ENCODE measurements at regions of chr2 and their contacts with region 1.

Region 1: DNA sequence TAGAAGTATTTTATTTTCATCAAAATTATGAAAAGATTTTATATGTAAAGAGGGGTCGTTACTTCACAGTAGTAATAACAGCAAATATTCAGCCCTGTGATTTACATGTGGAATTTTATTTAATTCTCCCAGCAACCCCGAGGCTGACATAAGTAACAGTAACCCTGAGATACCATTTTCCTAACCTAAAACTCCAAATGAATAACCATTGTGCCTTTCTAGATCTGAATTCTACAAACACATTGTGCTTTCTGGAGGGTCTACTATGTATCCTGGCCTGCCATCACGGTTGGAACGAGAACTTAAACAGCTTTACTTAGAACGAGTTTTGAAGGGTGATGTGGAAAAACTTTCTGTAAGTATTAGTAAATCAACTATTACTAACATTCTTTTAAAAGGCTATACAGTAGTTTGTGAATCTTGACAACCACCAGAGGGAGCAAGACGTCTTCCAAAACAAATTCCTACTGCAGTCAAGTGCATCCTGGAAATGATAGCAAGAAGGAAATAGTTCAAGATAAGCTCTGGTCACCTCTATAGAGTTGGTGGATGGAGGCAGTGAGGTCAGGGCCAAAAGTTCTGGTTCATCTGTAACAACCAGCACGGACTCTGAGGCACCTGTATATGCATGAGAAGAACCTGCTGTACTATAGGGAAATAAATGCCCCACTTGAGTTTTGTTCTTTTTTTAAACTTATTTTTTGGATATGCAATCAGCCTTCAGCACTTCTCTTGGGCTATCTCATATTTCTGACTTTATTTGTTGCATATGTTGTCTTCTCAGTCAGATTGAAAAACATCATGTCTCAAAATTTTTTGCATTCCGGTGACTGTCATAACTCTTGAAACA is 37.4 kb downstream of the ACTR2 start:
- DNase-seq: peak; percentile 79
- H3K4me3 ChIP-seq: no peak overlapping the region
- H3K27ac ChIP-seq: no peak overlapping the region
- H3K27me3 ChIP-seq: no peaks in the 10 kb centered on the region
- CTCF ChIP-seq: peak; percentile 72

Region 2: GRCh38 chr2:65252640-65253039 is 12.4 kb before region 1 on chr2:
- CTCF ChIA-PET with region 1: interaction called, 22 read pairs
- POLR2A ChIA-PET with region 1: no interaction called
- DNase-seq: no peak
- H3K4me3 ChIP-seq: no peak overlapping the region
- H3K27ac ChIP-seq: no peak overlapping the region
- H3K27me3 ChIP-seq: no peaks in the 10 kb centered on the region
- CTCF ChIP-seq: no peak

Region 3: GRCh38 chr2:65278531-65278981 is 13.5 kb after region 1 on chr2:
- CTCF ChIA-PET with region 1: interaction called, 45 read pairs
- POLR2A ChIA-PET with region 1: no interaction called
- DNase-seq: no peak
- H3K4me3 ChIP-seq: no peak overlapping the region
- H3K27ac ChIP-seq: no peak overlapping the region
- H3K27me3 ChIP-seq: no peaks in the 10 kb centered on the region
- CTCF ChIP-seq: no peak

Region 4: DNA sequence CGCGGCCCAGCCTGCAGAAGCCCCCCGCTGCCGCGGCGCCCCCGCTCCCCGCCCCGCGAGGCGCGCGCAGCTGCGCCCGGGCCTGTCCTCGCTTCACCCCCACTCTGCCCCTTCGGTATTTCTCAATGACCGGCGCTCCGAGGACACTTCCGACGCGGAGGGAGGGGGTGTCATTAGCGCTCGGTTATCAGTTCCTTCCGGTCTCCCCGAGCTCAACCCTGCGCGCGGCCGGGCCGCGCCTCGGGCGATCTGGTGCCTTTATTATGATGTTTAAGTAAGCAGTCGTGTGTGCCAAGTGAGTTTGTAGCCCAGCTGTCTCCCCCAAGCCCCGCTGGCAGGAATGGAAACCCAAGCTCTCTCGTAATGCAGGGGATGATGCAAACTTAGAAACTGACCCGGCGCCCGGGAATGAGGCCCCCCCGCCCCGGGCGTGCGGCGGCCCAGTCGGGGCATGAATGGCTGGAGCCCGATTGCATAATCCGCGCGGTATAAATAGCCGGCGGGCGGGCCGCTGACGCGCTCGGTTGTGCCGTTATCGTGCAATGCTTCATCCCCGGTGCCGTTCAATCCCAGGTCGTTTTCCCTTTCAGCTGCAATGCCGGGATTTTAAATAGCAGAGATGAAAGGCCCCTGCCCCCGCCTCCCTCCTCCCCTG is 171.2 kb after region 1 on chr2:
- CTCF ChIA-PET with region 1: interaction called, 32 read pairs
- POLR2A ChIA-PET with region 1: interaction called, 8 read pairs
- DNase-seq: peak; percentile 94
- H3K4me3 ChIP-seq: peak overlapping the region; percentile 69
- H3K27ac ChIP-seq: peak overlapping the region; percentile 99
- H3K27me3 ChIP-seq: no peaks in the 10 kb centered on the region
- CTCF ChIP-seq: no peak

Region 5: GRCh38 chr2:65541773-65542172 is 276.7 kb after region 1 on chr2:
- CTCF ChIA-PET with region 1: interaction called, 12 read pairs
- POLR2A ChIA-PET with region 1: interaction called, 3 read pairs
- DNase-seq: no peak
- H3K4me3 ChIP-seq: no peak overlapping the region
- H3K27ac ChIP-seq: no peak overlapping the region
- H3K27me3 ChIP-seq: no peaks in the 10 kb centered on the region
- CTCF ChIP-seq: no peak

Region 6: GRCh38 chr2:65554765-65555591 is 289.9 kb after region 1 on chr2:
- CTCF ChIA-PET with region 1: interaction called, 44 read pairs
- POLR2A ChIA-PET with region 1: no interaction called
- DNase-seq: no peak
- H3K4me3 ChIP-seq: no peak overlapping the region
- H3K27ac ChIP-seq: no peak overlapping the region
- H3K27me3 ChIP-seq: no peaks in the 10 kb centered on the region
- CTCF ChIP-seq: no peak

Region 7: GRCh38 chr2:65576861-65577601 is 312.0 kb after region 1 on chr2:
- CTCF ChIA-PET with region 1: interaction called, 31 read pairs
- POLR2A ChIA-PET with region 1: no interaction called
- DNase-seq: peak; percentile 83
- H3K4me3 ChIP-seq: peak overlapping the region; percentile 13; the same call in 1 of the 2 replicates
- H3K27ac ChIP-seq: peak overlapping the region; percentile 90
- H3K27me3 ChIP-seq: no peaks in the 10 kb centered on the region
- CTCF ChIP-seq: no peak

Region 8: DNA sequence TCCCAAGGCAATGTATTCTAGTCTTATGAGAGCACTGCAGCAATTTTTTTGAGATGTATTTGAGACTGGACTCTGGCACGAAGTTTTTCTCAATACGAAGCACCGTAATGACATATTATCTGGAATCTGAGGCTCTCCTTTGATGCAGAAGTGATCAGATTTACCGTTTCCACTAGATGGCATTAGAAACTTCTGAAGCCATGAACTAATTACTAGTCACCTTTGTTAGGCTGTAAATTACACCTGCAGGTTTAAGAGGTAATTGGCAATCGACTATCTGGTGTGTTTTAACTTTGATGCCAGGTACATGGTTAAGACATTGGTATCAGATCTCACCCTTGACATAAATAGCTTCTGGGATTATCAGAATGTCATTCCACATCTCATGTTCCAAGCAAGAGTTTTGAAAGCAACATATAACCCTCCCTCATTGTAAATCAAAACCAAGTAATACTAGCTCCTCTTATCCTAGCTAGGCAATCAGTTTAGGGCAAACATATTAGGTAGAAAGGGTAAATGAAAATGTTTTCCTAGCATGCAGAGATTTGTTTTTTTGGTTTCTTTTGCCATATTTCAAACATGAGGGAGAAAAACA is 422.0 kb after region 1 on chr2:
- CTCF ChIA-PET with region 1: no interaction called
- POLR2A ChIA-PET with region 1: no interaction called
- DNase-seq: no peak
- H3K4me3 ChIP-seq: no peak overlapping the region
- H3K27ac ChIP-seq: no peak overlapping the region
- H3K27me3 ChIP-seq: peaks cover 20% of the 10 kb centered on the region
- CTCF ChIP-seq: no peak